ENCODE measurements at regions of chr6 and their contacts with region 1.

Region 1: GRCh38 chr6:67839818-67840217 is 795.3 kb upstream of the ADGRB3 start:
- DNase-seq: no peak
- H3K4me3 ChIP-seq: no peak overlapping the region
- H3K27ac ChIP-seq: no peak overlapping the region
- H3K4me1 ChIP-seq: no peaks in the 10 kb centered on the region
- H3K27me3 ChIP-seq: no peaks in the 10 kb centered on the region
- CTCF ChIP-seq: no peak
- EP300 ChIP-seq: no peak
- POLR2A ChIP-seq: no peak

Region 2: GRCh38 chr6:69179681-69180080 is 1339.9 kb after region 1 on chr6:
- intact Hi-C with region 1: loop called in 1 of 4 experiments (anchors 5 kb)
- DNase-seq: no peak
- H3K4me3 ChIP-seq: no peak overlapping the region
- H3K27ac ChIP-seq: no peak overlapping the region
- H3K4me1 ChIP-seq: no peaks in the 10 kb centered on the region
- H3K27me3 ChIP-seq: no peaks in the 10 kb centered on the region
- CTCF ChIP-seq: no peak
- EP300 ChIP-seq: no peak
- POLR2A ChIP-seq: no peak

Measured in ovary (tissue), 10 donors.